GM12878 (cell line): ENCODE measurements at regions of chr17 and their contacts with region 1.

Region 1: GRCh38 chr17:32519228-32520103 is 32.7 kb downstream of the CDK5R1 start:
- DNase-seq: no peak
- ATAC-seq: peak; percentile 38
- H3K4me3 ChIP-seq: peak overlapping the region; percentile 25; the same call in 1 of the 2 replicates
- H3K27ac ChIP-seq: peak overlapping the region; percentile 84
- H3K4me1 ChIP-seq: peaks cover 88% of the 10 kb centered on the region
- H3K27me3 ChIP-seq: no peaks in the 10 kb centered on the region
- CTCF ChIP-seq: no peak
- EP300 ChIP-seq: no peak
- POLR2A ChIP-seq: peak; percentile 61; the same call in 1 of the 2 replicates
- RAD21 ChIP-seq: no peak

Region 2: DNA sequence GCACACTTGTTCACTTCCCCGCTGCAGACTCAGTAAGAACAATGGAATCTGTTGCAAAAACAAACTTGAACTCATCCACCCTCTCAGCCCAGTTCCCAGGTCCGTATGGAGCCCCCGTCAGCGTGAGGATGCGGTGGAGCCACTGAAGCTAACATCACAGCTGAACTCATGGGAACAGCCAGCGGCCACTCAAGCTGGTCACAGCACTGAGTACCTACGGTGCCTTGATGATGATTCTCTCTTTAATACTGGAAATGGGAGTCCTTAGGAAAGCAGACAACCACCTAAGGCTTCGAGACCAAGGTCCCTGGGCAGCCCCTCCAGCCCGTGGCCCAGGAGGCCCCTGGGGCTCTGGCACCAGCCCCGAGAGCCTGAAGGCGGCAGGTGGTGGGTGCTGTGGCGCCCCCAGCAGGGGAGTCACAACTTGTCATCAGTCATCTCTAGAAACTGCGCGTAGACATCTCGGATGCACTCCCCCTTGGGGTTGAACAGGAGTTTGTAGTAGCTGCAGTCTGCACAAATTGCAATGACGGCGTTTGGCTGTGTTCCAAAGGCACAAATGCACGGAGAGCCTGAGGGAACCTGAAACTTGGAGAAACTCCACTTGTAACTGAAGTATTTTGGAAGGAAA is 408.2 kb before region 1 on chr17:
- CTCF ChIA-PET with region 1: no interaction called
- POLR2A ChIA-PET with region 1: no interaction called
- RAD21 ChIA-PET with region 1: no interaction called
- SMC1A ChIA-PET with region 1: no interaction called
- in situ Hi-C with region 1: no loop called
- intact Hi-C with region 1: no loop called
- DNase-seq: no peak
- ATAC-seq: peak; percentile 38
- H3K4me3 ChIP-seq: no peak overlapping the region
- H3K27ac ChIP-seq: no peak overlapping the region
- H3K4me1 ChIP-seq: no peaks in the 10 kb centered on the region
- H3K27me3 ChIP-seq: no peaks in the 10 kb centered on the region
- CTCF ChIP-seq: peak; percentile 13 to 44 (median 16); a peak in 2 of 6 replicates
- EP300 ChIP-seq: no peak
- POLR2A ChIP-seq: no peak
- RAD21 ChIP-seq: no peak

Region 3: GRCh38 chr17:32503251-32504165 is 16.0 kb before region 1 on chr17:
- CTCF ChIA-PET with region 1: interaction called, 5 read pairs
- POLR2A ChIA-PET with region 1: interaction called, 18 read pairs
- RAD21 ChIA-PET with region 1: interaction called, 543 read pairs
- SMC1A ChIA-PET with region 1: interaction called, 34 read pairs
- in situ Hi-C with region 1: no loop called
- intact Hi-C with region 1: loop called (anchors 1 kb)
- DNase-seq: peak; percentile 98
- ATAC-seq: peak; percentile 95
- H3K4me3 ChIP-seq: peak overlapping the region; percentile 37; the same call in 1 of the 2 replicates
- H3K27ac ChIP-seq: peak overlapping the region; percentile 87
- H3K4me1 ChIP-seq: peaks cover 27% of the 10 kb centered on the region
- H3K27me3 ChIP-seq: no peaks in the 10 kb centered on the region
- CTCF ChIP-seq: no peak
- EP300 ChIP-seq: peak; percentile 92 to 94
- POLR2A ChIP-seq: peak; percentile 61
- RAD21 ChIP-seq: 0 out of 2 replicates have a peak, but pooled peaks have one; percentile 15

Region 4: GRCh38 chr17:32551186-32551955 is 31.9 kb after region 1 on chr17:
- CTCF ChIA-PET with region 1: interaction called, 8 read pairs
- POLR2A ChIA-PET with region 1: interaction called, 6 read pairs
- RAD21 ChIA-PET with region 1: interaction called, 77 read pairs
- SMC1A ChIA-PET with region 1: interaction called, 101 read pairs
- in situ Hi-C with region 1: no loop called
- intact Hi-C with region 1: no loop called
- DNase-seq: peak; percentile 71
- ATAC-seq: peak; percentile 96
- H3K4me3 ChIP-seq: no peak overlapping the region
- H3K27ac ChIP-seq: peak overlapping the region; percentile 38
- H3K4me1 ChIP-seq: peaks cover 24% of the 10 kb centered on the region
- H3K27me3 ChIP-seq: no peaks in the 10 kb centered on the region
- CTCF ChIP-seq: no peak
- EP300 ChIP-seq: peak in 1 of 2 experiments; percentile 48; a peak in 2 of 4 replicates
- POLR2A ChIP-seq: no peak
- RAD21 ChIP-seq: peak; percentile 27; the same call in 1 of the 2 replicates

Region 5: DNA sequence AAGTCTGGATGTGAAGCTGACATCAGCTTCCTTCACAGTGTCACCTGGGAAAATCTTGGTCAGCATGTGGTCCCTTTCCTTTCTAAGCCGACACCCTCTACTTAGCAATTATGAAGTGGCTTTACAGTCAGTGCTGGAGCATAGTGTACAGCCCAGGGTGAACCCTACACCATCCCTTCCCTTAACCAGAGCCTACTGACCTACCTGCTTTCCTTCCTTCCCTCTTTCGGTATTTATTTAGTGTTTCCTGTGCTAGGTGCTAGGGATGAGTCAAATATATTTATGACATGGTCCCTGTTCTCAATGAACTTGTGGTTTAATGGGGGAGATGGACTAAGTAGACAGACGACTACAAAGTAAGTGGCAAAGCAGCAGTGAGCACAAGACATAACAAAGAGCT is 44.9 kb after region 1 on chr17:
- CTCF ChIA-PET with region 1: interaction called, 19 read pairs
- POLR2A ChIA-PET with region 1: interaction called, 36 read pairs
- RAD21 ChIA-PET with region 1: interaction called, 69 read pairs
- SMC1A ChIA-PET with region 1: interaction called, 237 read pairs
- in situ Hi-C with region 1: no loop called
- intact Hi-C with region 1: loop called (anchors 1 kb)
- DNase-seq: no peak
- ATAC-seq: peak; percentile 47
- H3K4me3 ChIP-seq: no peak overlapping the region
- H3K27ac ChIP-seq: peak overlapping the region; percentile 23
- H3K4me1 ChIP-seq: peaks cover 46% of the 10 kb centered on the region
- H3K27me3 ChIP-seq: no peaks in the 10 kb centered on the region
- CTCF ChIP-seq: no peak
- EP300 ChIP-seq: no peak
- POLR2A ChIP-seq: no peak
- RAD21 ChIP-seq: no peak

Region 6: DNA sequence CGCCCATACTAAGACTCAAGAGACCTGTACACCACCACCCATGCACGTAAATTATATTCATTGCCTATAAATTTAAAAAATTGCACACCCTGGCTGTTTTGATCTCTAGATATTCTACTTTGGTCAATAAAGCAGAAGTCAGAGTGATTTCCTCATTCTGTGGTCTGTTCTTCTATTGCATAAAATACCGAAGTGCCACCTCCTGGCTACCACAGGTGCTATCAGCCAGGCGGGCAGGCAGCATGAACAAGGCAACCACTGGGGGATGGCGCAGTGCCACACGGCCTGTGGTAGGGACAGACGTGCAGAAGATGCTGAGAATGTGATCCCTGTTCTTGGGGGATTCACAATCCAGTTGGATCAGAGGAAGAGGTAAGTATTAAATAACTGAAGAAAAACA is 89.6 kb after region 1 on chr17:
- CTCF ChIA-PET with region 1: interaction called, 6 read pairs
- POLR2A ChIA-PET with region 1: interaction called, 5 read pairs
- RAD21 ChIA-PET with region 1: interaction called, 11 read pairs
- SMC1A ChIA-PET with region 1: interaction called, 14 read pairs
- in situ Hi-C with region 1: no loop called
- intact Hi-C with region 1: loop called (anchors 2 kb)
- DNase-seq: peak; percentile 59
- ATAC-seq: peak; percentile 100
- H3K4me3 ChIP-seq: no peak overlapping the region
- H3K27ac ChIP-seq: no peak overlapping the region
- H3K4me1 ChIP-seq: peaks cover 7% of the 10 kb centered on the region
- H3K27me3 ChIP-seq: no peaks in the 10 kb centered on the region
- CTCF ChIP-seq: peak; percentile 73 to 88 (median 78)
- EP300 ChIP-seq: no peak; a peak in 1 of 4 replicates
- POLR2A ChIP-seq: no peak
- RAD21 ChIP-seq: peak; percentile 88